OCI-LY7 (cell line): ENCODE measurements at regions of chr5 and their contacts with region 1.

Region 1: GRCh38 chr5:73519531-73520283 is 21.5 kb downstream of the BTF3 start:
- DNase-seq: peak; percentile 85
- H3K4me3 ChIP-seq: peak overlapping the region; percentile 30
- H3K27ac ChIP-seq: no peak overlapping the region
- H3K4me1 ChIP-seq: peaks cover 5% of the 10 kb centered on the region
- CTCF ChIP-seq: peak; percentile 82

Region 2: DNA sequence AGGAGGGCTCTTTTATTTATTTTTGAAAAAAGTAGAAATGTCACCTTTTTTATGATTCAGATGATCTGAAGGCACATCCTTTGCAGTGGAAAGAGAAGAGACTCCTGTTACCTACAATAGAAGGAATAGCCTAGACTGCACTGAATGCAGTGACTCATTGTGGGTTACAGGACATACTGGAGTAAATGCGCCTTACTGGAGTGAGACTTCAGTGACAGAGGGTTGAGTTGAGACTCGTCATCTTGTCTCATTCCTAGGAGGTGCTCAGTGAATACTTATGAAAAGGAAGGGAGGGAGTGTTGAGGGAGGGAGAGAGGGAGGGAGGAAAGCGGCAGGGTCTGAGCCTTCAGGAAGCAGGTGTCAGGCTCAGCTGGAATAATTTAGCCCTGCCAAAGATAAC is 20.5 kb after region 1 on chr5:
- CTCF ChIA-PET with region 1: no interaction called
- POLR2A ChIA-PET with region 1: interaction called, 3 read pairs
- intact Hi-C with region 1: loop called (anchors 1 kb)
- DNase-seq: no peak
- H3K4me3 ChIP-seq: no peak overlapping the region
- H3K27ac ChIP-seq: no peak overlapping the region
- H3K4me1 ChIP-seq: no peaks in the 10 kb centered on the region
- CTCF ChIP-seq: no peak

Region 3: DNA sequence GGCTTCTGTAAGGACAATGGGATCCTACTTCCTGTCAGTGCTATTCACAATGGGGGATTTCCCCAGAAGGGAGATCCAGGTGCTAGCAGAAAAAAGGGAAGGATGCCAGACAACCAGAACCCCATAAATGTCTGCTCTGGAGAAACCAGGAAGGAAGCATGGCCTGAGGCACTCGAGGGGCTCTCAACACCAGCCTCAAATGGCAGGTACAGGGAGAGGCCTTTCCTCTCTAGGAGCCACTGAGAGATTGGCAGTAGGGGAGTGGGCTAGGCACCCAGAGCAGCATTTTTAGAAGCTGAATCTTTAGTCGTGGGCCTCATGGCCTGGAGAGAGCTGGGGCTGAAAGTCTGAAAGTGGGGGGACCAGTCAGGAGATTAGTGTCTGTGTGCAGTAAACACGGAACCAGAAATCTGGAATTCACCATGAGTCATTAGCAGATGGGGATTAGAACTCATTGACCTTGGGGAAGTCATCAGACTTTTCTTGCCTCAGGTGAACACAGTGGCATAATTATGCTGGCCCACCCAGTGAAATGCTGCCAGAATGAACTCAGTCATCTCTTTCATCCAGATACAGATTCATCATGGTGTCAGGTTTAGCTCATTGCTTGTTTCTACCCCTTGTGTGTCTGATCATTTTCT is 134.6 kb after region 1 on chr5:
- CTCF ChIA-PET with region 1: no interaction called
- POLR2A ChIA-PET with region 1: no interaction called
- intact Hi-C with region 1: no loop called
- DNase-seq: no peak
- H3K4me3 ChIP-seq: no peak overlapping the region
- H3K27ac ChIP-seq: no peak overlapping the region
- H3K4me1 ChIP-seq: no peaks in the 10 kb centered on the region
- CTCF ChIP-seq: no peak

Region 4: DNA sequence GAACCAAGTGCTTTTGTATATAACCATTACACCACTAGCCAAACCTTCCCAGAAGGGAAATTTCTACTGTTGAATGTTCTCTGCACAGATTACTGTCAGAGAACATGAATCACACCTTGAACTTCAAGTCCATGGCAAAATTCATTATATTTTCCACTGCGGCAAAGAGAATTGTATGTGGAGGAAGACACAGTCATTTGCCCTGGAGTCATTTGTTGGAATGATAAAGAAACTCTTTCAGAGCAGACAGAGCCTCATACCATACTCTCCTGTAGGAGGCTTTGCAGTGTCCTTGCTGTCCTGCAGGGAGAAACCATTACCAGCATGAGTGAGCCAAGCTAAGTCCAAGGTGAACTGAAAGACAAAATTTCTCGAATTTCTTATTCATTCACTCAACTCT is 475.3 kb after region 1 on chr5:
- CTCF ChIA-PET with region 1: no interaction called
- POLR2A ChIA-PET with region 1: no interaction called
- intact Hi-C with region 1: no loop called
- DNase-seq: no peak
- H3K4me3 ChIP-seq: no peak overlapping the region
- H3K27ac ChIP-seq: no peak overlapping the region
- H3K4me1 ChIP-seq: no peaks in the 10 kb centered on the region
- CTCF ChIP-seq: no peak